ENCODE measurements at regions of chr6 and their contacts with region 1.

Region 1: GRCh38 chr6:158026054-158026900 is 44.6 kb downstream of the SYNJ2 start:
- DNase-seq: peak; percentile 96
- H3K4me3 ChIP-seq: peak overlapping the region; percentile 22
- H3K27ac ChIP-seq: peak overlapping the region; percentile 72
- H3K4me1 ChIP-seq: peaks cover 36% of the 10 kb centered on the region
- H3K27me3 ChIP-seq: no peaks in the 10 kb centered on the region
- CTCF ChIP-seq: peak; percentile 88

Region 2: DNA sequence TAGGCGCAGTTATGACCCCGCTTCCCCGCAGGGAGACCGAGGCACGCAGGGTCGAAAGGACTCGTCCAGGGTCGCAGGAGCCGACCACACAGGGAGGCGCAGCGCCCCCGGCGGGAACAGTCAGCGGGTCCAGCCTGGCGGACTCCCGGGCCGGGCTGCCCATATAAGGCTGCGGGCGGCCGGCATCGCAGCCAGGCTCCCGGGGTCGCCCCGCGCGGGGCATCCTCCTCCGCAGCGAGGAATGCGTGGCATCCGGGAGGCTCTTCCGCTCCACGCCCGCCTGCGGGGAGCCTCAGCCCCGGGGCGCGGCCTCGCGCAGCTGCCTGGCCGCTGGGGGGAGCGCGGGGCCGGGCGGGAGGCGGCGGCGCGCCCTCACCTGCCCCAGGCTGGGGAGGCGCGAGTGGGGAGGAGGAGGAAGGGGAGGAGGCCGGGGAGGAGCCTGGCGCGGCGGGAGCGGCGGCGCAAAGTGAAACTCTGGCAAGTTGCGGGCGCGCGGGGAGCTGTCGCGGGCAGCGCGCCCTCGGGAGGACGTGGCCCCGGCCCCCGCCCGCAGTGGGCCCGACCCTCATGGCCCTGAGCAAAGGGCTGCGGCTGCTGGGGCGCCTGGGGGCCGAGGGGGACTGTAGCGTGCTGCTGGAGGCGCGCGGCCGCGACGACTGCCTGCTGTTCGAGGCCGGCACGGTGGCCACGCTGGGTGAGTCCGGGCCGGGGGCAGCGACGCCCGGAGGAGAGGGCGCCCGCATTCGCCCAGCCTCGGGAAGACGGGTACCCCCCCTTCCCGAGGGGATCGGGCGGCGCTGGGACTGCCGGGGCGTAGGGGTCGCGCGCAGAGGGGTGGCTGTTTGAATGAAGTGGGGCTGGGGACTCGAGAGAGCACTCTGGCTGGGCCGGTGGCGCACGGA is 44.6 kb before region 1 on chr6 and contains the start of gene SYNJ2:
- CTCF ChIA-PET with region 1: interaction called, 5 read pairs
- POLR2A ChIA-PET with region 1: no interaction called
- intact Hi-C with region 1: loop called (anchors 5 kb)
- DNase-seq: peak; percentile 83
- H3K4me3 ChIP-seq: peak within 1 kb of the TSS; percentile 94
- H3K27ac ChIP-seq: peak within 1 kb of the TSS; percentile 90
- H3K4me1 ChIP-seq: peaks cover 17% of the 10 kb centered on the region
- H3K27me3 ChIP-seq: no peaks in the 10 kb centered on the region
- CTCF ChIP-seq: peak; percentile 52
- total RNA-seq, gene SYNJ2: 34.5 and 37.0 TPM in 2 replicates

Measured in A673 (cell line).